Uterus (tissue), 4 donors: ENCODE measurements at regions of chr16 and their contacts with region 1.

Region 1: GRCh38 chr16:22297114-22297878 is at the start of gene POLR3E:
- DNase-seq: peak; percentile 99 to 100
- H3K4me3 ChIP-seq: peak within 1 kb of the TSS; percentile 78 to 90
- H3K27ac ChIP-seq: peak within 1 kb of the TSS; percentile 90 to 93
- H3K4me1 ChIP-seq: no peaks in the 10 kb centered on the region
- H3K27me3 ChIP-seq: no peaks in the 10 kb centered on the region
- CTCF ChIP-seq: peak; percentile 89 to 99 (median 99)
- POLR2A ChIP-seq: peak in 1 of 2 donors; percentile 66
- total RNA-seq, gene POLR3E: 45.1 to 179 (median 64.5) TPM

Region 2: DNA sequence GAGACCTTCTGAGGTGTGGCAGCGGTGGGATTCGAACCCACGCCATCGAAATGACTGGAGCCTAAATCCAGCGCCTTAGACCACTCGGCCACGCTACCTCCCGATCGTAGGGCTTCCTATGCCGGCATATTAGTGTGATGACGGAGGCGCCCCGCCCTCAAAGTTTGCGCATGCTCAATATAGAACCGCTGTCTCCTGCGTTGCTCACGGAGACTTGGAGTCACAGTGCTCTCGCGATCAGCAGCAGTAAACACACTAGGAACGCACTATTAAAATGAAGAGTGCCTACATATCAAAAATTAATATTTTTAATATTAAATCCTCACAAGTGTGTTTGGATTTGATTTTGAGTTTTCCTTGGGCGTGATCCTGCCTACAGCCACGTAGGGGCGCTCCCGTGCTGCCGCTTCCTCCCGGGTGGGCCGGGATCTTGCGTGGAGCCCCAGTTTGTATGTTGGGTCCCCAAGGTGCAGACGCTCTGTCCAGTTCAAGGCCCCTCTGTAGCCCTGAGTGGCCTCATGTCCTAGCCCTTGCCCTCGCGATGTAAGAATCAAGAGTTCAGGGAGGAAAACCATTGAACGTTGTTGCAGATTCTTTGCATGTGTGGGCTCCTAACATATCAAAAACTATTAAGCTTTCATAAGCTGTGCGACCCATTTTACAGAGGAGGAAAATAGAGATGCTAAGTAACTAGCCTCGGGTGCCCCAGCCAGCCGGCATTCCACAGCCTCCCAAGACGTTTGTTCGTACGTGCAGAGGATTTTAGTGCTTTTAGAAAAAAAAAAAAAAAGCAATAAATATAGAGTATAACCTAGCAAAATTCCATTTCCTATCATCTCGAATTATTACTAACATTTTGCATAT is 101.4 kb before region 1 on chr16:
- intact Hi-C with region 1: loop called (anchors 2 kb)
- DNase-seq: peak; percentile 95
- H3K4me3 ChIP-seq: peak overlapping the region; percentile 34 to 55
- H3K27ac ChIP-seq: peak overlapping the region; percentile 85 to 89
- H3K4me1 ChIP-seq: peaks cover 0 to 3% of the 10 kb centered on the region in 2 donors
- H3K27me3 ChIP-seq: no peaks in the 10 kb centered on the region
- CTCF ChIP-seq: peak; percentile 81 to 98 (median 92)
- POLR2A ChIP-seq: peak in 1 of 2 donors; percentile 61